CD8-positive, alpha-beta memory T cell (primary cell): ENCODE measurements at regions of chr14 and their contacts with region 1.

Region 1: GRCh38 chr14:99230208-99231151 is 41.5 kb downstream of the BCL11B start:
- DNase-seq: peak; percentile 82 to 95 (median 89)
- H3K4me3 ChIP-seq: peak overlapping the region; percentile 39
- H3K4me3 Mint-ChIP-seq: peak overlapping the region; percentile 76 to 94 (median 84)
- H3K27ac ChIP-seq: peak overlapping the region; percentile 68
- H3K27ac Mint-ChIP-seq: peak overlapping the region; percentile 97 to 100 (median 99)
- H3K4me1 ChIP-seq: peaks cover 97% of the 10 kb centered on the region
- H3K4me1 Mint-ChIP-seq: peaks cover 95 to 98% (median 95%) of the 10 kb centered on the region in 3 donors
- H3K27me3 ChIP-seq: no peaks in the 10 kb centered on the region
- H3K27me3 Mint-ChIP-seq: peaks cover 0 to 7% of the 10 kb centered on the region in 2 donors

Region 2: DNA sequence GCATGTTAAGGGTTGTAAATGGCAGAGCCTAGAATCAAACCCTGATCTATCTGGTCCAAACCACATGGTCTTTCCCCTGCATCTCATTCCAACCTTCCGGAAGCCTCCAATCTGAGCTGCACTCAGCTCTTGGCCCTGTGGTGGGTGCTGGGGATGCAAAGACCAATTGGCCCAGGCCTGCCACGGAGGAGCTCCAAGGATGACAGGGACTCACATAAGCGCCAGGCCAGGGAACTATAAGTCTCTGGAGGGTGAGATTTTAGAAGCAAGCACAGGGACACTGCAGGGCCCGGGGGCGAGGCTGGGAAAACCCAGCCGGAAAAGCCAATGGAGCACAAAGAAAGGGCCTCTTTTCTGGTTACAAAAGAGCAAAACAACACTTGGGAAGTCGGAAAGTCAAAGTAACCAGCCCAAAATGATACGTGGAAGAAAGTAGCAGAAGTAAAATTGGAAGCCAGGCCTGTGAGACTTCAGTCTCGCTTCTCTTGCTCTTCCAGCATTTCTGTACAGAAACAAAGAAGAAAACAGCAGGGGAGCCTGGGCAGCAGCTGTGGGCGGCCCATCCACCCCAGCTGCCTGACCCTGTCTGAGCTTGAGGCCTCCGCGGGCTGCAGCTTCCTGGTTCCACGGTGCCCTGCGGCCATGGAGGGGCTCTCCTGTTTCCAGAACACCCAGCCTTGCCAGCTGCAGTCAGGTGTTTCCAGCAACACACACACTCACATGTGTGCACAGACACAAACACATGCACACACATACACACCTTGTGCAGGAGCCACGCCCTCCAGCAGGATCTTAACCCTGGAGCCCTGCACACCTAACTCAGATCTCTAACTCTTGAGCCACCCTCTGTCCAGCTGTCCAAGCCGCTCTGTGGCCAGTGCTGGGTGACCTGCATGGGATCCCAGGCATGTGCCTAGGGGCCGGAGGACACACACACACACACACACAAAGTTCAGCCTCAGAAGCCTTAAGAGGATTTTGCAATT is 136.7 kb before region 1 on chr14:
- CTCF ChIA-PET with region 1: no interaction called
- POLR2A ChIA-PET with region 1: no interaction called
- DNase-seq: no peak
- H3K4me3 ChIP-seq: no peak overlapping the region
- H3K4me3 Mint-ChIP-seq: no peak overlapping the region
- H3K27ac ChIP-seq: no peak overlapping the region
- H3K27ac Mint-ChIP-seq: no peak overlapping the region
- H3K4me1 ChIP-seq: no peaks in the 10 kb centered on the region
- H3K4me1 Mint-ChIP-seq: no peaks in the 10 kb centered on the region
- H3K27me3 ChIP-seq: no peaks in the 10 kb centered on the region
- H3K27me3 Mint-ChIP-seq: no peaks in the 10 kb centered on the region

Region 3: DNA sequence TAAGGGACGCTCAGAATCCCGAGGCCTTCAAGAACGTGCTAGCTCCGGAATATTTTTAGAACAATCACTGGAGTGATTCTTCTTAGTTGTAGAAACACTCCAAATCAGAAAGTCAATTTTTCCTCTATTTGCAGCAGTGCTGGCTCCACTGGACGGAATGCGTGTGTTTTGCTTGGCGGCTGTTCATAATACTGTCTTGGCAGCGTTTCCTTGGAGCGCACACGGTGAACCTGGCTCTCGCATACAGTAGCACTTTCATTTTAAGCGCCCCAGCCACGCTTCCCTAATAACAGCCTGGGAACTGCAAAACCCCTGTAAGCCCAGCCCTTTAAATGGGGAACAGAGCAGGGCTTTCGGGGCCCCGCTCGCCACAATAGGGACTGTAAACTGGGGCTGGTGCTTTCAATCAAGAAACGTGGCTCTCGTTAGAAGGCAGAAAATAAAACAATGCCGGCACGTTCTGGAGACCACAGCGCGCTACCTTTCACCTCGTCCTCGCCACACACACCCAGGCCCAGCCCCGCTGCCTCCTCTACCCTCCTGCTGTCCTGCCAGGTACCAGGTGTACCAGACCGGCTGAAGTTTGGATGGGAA is 38.4 kb before region 1 on chr14:
- CTCF ChIA-PET with region 1: interaction called, 16 read pairs
- POLR2A ChIA-PET with region 1: interaction called, 10 read pairs
- DNase-seq: peak in 2 of 5 donors; percentile 59 to 60
- H3K4me3 ChIP-seq: peak overlapping the region; percentile 63
- H3K4me3 Mint-ChIP-seq: peak overlapping the region; percentile 83 to 95 (median 88)
- H3K27ac ChIP-seq: peak overlapping the region; percentile 68
- H3K27ac Mint-ChIP-seq: peak overlapping the region; percentile 94 to 98 (median 96)
- H3K4me1 ChIP-seq: peaks cover 97% of the 10 kb centered on the region
- H3K4me1 Mint-ChIP-seq: peaks cover 93 to 100% (median 98%) of the 10 kb centered on the region in 3 donors
- H3K27me3 ChIP-seq: no peaks in the 10 kb centered on the region
- H3K27me3 Mint-ChIP-seq: peaks cover 0 to 9% of the 10 kb centered on the region in 2 donors

Region 4: DNA sequence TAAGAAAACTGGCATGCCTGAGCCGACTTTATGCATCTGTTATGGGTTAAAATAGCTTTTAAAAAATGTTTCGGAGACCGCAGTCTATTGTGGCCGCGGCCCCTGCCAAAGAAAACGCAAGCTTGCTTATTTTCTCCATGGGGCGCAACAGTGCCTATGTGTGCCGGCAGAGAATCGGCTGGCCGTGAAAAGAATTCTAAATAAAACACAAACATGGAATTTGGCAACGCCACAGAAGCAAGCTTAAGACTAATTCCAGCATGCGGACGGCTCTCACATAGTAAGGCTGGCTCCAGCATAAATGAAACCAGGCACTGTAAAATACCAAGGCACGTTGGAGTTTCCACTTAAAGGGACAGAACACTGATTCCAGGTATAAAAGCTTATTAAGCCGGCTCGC is 15.2 kb before region 1 on chr14:
- CTCF ChIA-PET with region 1: interaction called, 10 read pairs
- POLR2A ChIA-PET with region 1: interaction called, 13 read pairs
- DNase-seq: no peak
- H3K4me3 ChIP-seq: peak overlapping the region; percentile 33
- H3K4me3 Mint-ChIP-seq: peak overlapping the region; percentile 42 to 84 (median 77)
- H3K27ac ChIP-seq: no peak overlapping the region
- H3K27ac Mint-ChIP-seq: peak overlapping the region; percentile 17 to 96 (median 86)
- H3K4me1 ChIP-seq: peaks cover 95% of the 10 kb centered on the region
- H3K4me1 Mint-ChIP-seq: peaks cover 94 to 99% (median 99%) of the 10 kb centered on the region in 3 donors
- H3K27me3 ChIP-seq: no peaks in the 10 kb centered on the region
- H3K27me3 Mint-ChIP-seq: peaks cover 0 to 7% of the 10 kb centered on the region in 2 donors

Region 5: GRCh38 chr14:99245564-99246511 is 15.4 kb after region 1 on chr14:
- CTCF ChIA-PET with region 1: interaction called, 38 read pairs
- POLR2A ChIA-PET with region 1: interaction called, 169 read pairs
- DNase-seq: no peak
- H3K4me3 ChIP-seq: peak overlapping the region; percentile 70
- H3K4me3 Mint-ChIP-seq: peak overlapping the region; percentile 84 to 94 (median 87)
- H3K27ac ChIP-seq: peak overlapping the region; percentile 57
- H3K27ac Mint-ChIP-seq: peak overlapping the region; percentile 90 to 100 (median 99)
- H3K4me1 ChIP-seq: peaks cover 89% of the 10 kb centered on the region
- H3K4me1 Mint-ChIP-seq: peaks cover 85 to 87% (median 86%) of the 10 kb centered on the region in 3 donors
- H3K27me3 ChIP-seq: no peaks in the 10 kb centered on the region
- H3K27me3 Mint-ChIP-seq: peaks cover 0 to 2% of the 10 kb centered on the region in 2 donors

Region 6: GRCh38 chr14:99252940-99253868 is 22.7 kb after region 1 on chr14:
- CTCF ChIA-PET with region 1: interaction called, 18 read pairs
- POLR2A ChIA-PET with region 1: interaction called, 169 read pairs
- DNase-seq: peak in 3 of 5 donors; percentile 75 to 78 (median 75)
- H3K4me3 ChIP-seq: peak overlapping the region; percentile 44
- H3K4me3 Mint-ChIP-seq: peak overlapping the region; percentile 84 to 99 (median 92)
- H3K27ac ChIP-seq: peak overlapping the region; percentile 28
- H3K27ac Mint-ChIP-seq: peak overlapping the region; percentile 95 to 100 (median 100)
- H3K4me1 ChIP-seq: peaks cover 100% of the 10 kb centered on the region
- H3K4me1 Mint-ChIP-seq: peaks cover 93 to 99% (median 98%) of the 10 kb centered on the region in 3 donors
- H3K27me3 ChIP-seq: no peaks in the 10 kb centered on the region
- H3K27me3 Mint-ChIP-seq: no peaks in the 10 kb centered on the region